ENCODE measurements at regions of chr10 and their contacts with region 1.

Region 1: GRCh38 chr10:6647811-6648526 is 67.9 kb upstream of the PRKCQ start:
- DNase-seq: peak in 1 of 2 donors; percentile 10
- ATAC-seq: no peak
- H3K4me3 ChIP-seq: no peak overlapping the region
- H3K27ac ChIP-seq: no peak overlapping the region
- H3K4me1 ChIP-seq: peaks cover 0 to 4% (median 0%) of the 10 kb centered on the region in 9 donors
- H3K27me3 ChIP-seq: peaks cover 0 to 70% (median 30%) of the 10 kb centered on the region in 7 donors
- CTCF ChIP-seq: peak; percentile 6 to 75 (median 43)

Region 2: DNA sequence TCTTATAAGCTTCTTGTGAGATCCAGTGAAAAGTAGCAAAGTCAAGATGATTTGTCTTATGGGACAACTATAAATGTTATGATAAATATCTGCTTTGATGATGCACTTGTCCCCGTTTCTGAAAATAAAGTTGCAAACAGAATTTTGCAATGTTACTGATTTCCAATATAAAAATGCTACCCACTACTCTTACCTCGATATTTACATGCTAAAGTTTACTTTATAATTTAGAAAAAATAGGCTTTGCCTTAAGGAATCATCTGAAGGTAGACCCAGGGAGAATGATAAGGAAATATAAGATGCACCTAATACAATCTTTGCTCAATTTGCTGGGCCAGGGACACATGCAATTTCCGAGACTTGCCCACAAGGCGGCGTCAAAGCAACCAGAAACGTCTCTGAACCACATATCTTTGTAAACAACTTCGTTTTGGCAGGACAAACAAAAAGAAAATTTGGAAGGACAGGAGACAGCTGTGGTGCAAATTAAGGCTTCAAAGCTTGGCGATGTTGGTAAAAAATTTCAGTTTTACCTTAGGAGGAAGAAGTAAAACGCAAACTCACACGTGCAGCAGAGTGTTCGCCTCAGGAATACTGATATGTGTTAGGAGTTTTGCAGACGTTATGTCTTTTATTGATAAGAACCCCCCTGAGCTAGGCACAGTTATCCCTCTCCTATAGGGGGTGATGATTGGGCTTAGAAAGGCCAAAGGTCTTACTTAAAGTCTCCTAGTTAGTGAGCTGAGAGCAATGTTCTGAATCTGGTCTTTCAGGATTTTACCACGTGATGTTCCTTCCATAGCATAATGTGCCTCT is 202.3 kb before region 1 on chr10:
- intact Hi-C with region 1: loop called in 1 of 10 experiments (anchors 10 kb)
- DNase-seq: peak; percentile 20 to 35
- ATAC-seq: no peak
- H3K4me3 ChIP-seq: peak overlapping the region in 3 of 10 donors; percentile 13 to 16 (median 14)
- H3K27ac ChIP-seq: no peak overlapping the region
- H3K4me1 ChIP-seq: peaks cover 0 to 4% (median 0%) of the 10 kb centered on the region in 9 donors
- H3K27me3 ChIP-seq: no peaks in the 10 kb centered on the region
- CTCF ChIP-seq: peak in 8 of 9 donors; percentile 14 to 67 (median 51)

Region 3: GRCh38 chr10:6580279-6581029 is 67.5 kb before region 1 on chr10:
- intact Hi-C with region 1: loop called in 1 of 10 experiments (anchors 10 kb)
- DNase-seq: peak; percentile 33 to 74
- ATAC-seq: peak; percentile 57 to 93 (median 86)
- H3K4me3 ChIP-seq: peak overlapping the region in 9 of 10 donors; percentile 44 to 73 (median 52)
- H3K27ac ChIP-seq: peak overlapping the region in 2 of 10 donors; percentile 25 to 90
- H3K4me1 ChIP-seq: peaks cover 0 to 23% (median 4%) of the 10 kb centered on the region in 9 donors
- H3K27me3 ChIP-seq: peaks cover 0 to 74% (median 39%) of the 10 kb centered on the region in 7 donors
- CTCF ChIP-seq: peak; percentile 36 to 69 (median 48)